HEK293 (cell line): ENCODE measurements at regions of chr9 and their contacts with region 1.

Region 1: DNA sequence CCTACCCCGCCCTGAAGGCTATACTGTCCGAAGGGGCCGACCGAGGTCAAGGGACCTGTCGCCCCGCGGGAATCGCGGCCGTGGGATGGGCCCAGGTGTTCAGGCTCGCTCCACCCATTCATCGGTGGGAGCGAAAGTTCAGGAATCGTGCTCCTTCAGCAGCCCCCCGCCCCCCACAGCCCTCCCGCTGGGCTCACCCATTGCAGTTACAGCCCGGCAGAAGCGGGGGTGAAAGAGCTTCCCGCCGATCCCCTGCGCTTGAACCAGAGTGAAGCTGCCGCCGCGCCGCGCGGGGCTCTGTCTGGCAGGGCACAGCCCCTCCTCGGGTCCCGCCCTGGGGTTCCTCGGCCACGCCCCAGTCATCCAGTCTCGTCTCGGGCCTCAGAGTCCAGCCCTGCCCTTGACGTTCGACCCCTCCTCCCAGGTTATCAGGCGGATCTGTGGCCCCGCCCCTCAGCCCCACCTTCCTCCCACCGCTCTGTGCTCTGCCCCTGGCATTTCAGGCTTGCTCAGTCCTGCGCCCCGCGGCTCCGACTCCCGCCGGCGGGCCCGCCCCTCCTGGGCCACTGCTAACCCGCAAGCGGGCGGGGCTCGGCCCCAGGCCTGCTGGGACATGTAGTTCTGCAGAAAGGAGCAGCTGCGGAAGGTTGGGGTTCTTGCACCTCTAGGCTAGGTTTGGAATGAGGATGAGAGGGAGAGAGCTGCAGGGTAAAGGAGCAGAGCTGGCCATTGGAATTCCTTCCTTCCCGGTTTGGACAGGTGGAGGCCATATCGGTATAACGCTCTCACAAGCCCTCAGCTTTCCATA is at the start of gene MYORG:
- H3K4me3 ChIP-seq: peak within 1 kb of the TSS; percentile 74
- H3K27ac ChIP-seq: peak within 1 kb of the TSS; percentile 29; the same call in 1 of the 2 replicates
- H3K4me1 ChIP-seq: no peaks in the 10 kb centered on the region; the same call in none of the 2 replicates
- CTCF ChIP-seq: no peak

Region 2: DNA sequence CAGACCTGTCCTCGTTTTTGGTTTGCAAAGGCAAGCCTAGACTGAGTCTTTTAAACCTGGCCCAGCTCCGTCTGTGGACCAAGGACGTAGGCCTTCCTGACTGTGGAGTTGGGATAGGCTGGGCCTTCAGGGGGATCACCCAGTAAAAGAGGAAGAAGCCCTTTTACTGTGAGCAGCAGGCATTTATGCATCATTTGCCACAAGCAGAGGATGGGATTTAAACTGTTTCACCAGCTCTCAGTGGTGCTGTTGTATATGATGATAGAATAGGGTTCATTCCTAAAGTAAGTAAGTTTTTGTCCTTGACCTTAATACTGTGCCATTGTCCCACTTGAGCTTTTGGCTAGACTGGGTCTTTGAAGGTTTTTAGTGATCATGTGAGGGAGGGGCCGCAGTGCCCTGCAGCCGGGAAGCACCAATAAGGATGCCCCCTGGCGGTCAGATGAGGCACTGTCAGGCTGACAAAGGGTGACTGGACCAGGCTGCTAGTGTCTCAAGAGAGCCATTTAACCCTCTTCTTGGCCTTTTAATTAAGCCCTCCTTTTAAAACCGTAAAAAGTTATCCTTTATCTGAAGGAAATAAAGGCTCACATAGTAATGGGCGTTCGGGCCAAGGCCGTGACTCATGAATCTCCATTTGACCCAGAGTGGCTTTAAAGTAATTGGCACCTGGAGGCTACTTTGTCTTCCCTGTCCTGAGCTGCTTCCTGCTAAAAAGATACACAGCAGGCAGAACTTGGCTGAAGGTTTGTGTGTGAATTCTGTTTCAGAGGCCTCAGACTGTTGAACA is 123.9 kb before region 1 on chr9:
- CTCF ChIA-PET with region 1: interaction called, 17 read pairs
- POLR2A ChIA-PET with region 1: no interaction called
- H3K4me3 ChIP-seq: no peak overlapping the region
- H3K27ac ChIP-seq: no peak overlapping the region
- H3K4me1 ChIP-seq: no peaks in the 10 kb centered on the region
- CTCF ChIP-seq: no peak; the same call in 1 of the 2 replicates

Region 3: DNA sequence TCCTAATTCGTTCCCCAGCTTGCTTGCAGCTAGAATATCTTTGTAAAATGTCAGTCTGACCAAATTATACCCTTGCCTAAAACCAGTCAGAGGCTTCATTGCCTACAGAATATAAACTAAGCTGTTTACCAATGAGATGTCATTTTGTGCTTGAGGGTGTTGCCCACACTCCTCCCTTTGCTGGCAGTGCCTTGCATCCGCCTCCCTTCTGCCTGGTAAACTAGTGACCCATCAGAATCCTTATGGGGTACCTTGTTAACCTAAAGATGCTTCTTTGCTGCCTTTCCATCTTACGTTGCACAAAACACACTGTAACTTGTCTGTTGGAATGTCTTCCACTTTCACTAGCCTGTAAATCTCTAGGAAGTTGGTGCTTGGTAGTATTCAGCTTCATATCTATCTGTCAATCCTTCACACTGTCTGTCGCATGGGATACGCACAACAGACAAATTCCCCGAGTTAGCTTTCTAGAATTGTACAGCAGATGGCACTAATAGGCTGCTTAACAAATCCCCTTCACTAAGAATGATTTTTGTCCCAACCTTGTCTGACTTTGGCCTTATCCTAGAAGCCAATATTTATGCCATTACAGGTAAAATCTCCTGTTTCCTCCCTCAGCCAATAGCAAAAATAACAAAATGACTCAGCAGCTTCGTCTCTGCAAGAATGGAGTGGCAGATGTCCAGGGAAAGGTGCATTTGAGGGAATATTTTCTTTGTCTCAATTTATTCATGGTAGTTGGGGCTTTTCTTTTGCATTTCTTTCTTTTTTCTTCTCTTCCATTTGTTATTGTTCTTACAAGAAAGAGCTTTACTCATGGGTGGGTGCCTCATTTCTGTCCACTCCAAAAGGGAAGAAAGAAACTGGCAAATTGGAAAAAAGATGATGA is 44.5 kb before region 1 on chr9:
- CTCF ChIA-PET with region 1: interaction called, 172 read pairs
- POLR2A ChIA-PET with region 1: interaction called, 16 read pairs
- H3K4me3 ChIP-seq: no peak overlapping the region
- H3K27ac ChIP-seq: no peak overlapping the region
- H3K4me1 ChIP-seq: no peaks in the 10 kb centered on the region
- CTCF ChIP-seq: peak; percentile 48; the same call in 1 of the 2 replicates

Region 4: GRCh38 chr9:34338665-34339385 is 38.0 kb before region 1 on chr9:
- CTCF ChIA-PET with region 1: interaction called, 172 read pairs
- POLR2A ChIA-PET with region 1: interaction called, 16 read pairs
- H3K4me3 ChIP-seq: no peak overlapping the region
- H3K27ac ChIP-seq: no peak overlapping the region
- H3K4me1 ChIP-seq: no peaks in the 10 kb centered on the region
- CTCF ChIP-seq: no peak

Region 5: DNA sequence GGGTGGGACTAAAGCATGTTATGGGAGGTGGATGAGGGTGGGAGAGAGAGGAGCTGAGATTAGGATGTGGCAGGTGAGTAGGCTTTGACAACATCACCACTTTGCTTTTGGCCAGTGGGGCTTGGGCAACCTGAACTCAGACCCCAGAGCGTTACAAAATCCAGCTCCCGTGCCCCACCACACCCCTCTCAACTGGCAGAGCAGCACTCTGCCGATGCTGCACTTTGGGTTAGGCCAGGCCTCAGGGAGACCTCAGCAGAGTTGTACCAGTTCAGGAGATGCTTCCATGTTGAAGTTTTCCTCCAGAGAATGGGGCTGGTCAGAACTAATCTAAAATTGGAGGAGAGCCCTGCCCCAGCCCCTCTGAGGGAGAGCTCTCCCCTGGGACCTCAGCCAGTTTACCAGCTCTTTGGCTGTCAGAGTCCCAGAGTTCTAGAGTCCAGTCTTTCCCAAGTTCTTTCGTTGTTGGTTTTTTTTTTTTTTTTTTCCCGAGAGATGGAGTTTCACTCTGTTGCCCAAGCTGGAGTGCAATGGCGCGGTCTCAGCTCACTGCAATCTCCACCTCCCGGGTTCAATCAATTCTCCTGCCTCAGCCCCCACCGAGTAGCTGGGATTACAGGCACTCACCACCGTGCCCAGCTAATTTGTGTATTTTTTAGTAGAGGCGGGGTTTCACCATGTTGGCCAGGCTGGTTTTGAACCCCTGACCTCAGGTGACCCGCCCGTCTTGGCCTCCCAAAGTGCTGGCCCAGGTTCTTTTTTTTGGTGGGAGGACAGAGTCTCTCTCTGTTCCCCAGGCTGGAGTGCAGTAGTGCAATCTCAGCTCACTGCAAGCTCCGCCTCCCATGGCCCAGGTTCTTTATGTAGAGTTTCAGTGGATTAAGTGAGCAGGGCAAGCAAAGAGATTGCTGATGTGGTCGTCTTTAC is 29.7 kb before region 1 on chr9:
- CTCF ChIA-PET with region 1: interaction called, 11 read pairs
- POLR2A ChIA-PET with region 1: interaction called, 7 read pairs
- H3K4me3 ChIP-seq: no peak overlapping the region
- H3K27ac ChIP-seq: no peak overlapping the region
- H3K4me1 ChIP-seq: no peaks in the 10 kb centered on the region
- CTCF ChIP-seq: no peak

Region 6: GRCh38 chr9:34430843-34431437 is 54.1 kb after region 1 on chr9:
- CTCF ChIA-PET with region 1: no interaction called
- POLR2A ChIA-PET with region 1: no interaction called
- H3K4me3 ChIP-seq: no peak overlapping the region
- H3K27ac ChIP-seq: no peak overlapping the region
- H3K4me1 ChIP-seq: no peaks in the 10 kb centered on the region
- CTCF ChIP-seq: no peak

Region 7: DNA sequence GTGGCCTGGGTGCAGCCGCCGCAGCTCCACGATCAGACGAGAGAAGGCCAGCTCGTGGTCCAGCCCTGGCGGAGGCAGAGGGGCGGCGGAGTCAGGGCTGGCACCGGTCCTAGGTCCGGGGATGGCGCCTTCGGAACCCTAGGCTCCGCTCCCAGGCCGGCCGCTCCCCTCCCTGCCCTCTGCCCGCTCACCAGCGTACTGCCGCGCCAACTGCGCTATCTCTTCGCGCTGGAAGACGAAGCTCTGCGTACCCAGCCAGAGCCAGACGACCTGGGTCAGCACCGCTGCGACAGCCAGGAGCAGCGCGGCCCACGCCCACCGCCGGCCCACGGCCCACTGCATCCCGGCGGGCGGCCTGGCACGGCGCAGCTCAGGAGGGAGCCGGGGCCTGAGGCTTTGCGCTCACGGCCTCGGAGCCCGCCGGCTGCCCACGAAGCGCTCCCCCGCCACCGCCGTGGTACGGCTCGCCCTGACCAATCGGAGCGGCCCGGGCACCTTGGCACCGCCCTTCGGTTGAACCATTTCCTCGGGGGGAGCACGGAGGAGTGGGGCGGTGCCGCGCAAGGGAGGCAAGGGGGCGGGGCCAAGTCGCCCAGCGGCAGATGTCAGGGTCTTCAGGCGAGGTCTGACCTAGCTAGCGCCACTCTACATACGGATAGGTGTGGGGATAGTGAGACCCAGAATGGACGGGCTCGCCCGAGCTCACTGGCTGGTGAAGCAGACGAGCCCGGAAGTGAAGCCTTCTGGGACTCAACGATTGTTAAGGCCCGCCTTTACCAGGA is 260.7 kb after region 1 on chr9 and contains the start of gene SIGMAR1:
- CTCF ChIA-PET with region 1: interaction called, 5 read pairs
- POLR2A ChIA-PET with region 1: interaction called, 11 read pairs
- H3K4me3 ChIP-seq: peak within 1 kb of the TSS; percentile 67
- H3K27ac ChIP-seq: peak within 1 kb of the TSS; percentile 77
- H3K4me1 ChIP-seq: no peaks in the 10 kb centered on the region
- CTCF ChIP-seq: peak; percentile 20; the same call in 1 of the 2 replicates

Region 8: DNA sequence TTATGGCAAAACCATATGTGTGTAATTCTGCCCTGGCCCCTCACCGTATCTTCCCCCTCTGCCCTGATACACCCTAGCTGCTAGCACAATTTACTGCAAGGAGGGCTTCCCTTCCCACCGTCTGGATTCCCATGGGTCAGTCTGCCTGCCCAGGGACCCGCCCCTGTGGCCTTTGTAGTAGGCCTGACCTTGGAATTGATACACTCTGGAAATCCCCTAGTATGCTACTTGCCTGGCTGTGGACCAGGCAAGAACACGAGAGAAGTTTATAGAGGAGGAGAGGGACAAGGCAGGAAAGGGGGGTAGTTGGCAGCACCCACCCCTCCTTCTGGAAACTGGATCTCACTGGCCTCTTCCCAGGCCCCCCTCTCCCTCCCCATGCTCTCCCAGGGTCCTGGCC is 449.0 kb after region 1 on chr9:
- CTCF ChIA-PET with region 1: no interaction called
- POLR2A ChIA-PET with region 1: no interaction called
- H3K4me3 ChIP-seq: no peak overlapping the region
- H3K27ac ChIP-seq: no peak overlapping the region
- H3K4me1 ChIP-seq: no peaks in the 10 kb centered on the region
- CTCF ChIP-seq: no peak